Gastrocnemius medialis (tissue), 4 donors: ENCODE measurements at regions of chrX and their contacts with region 1.

Region 1: DNA sequence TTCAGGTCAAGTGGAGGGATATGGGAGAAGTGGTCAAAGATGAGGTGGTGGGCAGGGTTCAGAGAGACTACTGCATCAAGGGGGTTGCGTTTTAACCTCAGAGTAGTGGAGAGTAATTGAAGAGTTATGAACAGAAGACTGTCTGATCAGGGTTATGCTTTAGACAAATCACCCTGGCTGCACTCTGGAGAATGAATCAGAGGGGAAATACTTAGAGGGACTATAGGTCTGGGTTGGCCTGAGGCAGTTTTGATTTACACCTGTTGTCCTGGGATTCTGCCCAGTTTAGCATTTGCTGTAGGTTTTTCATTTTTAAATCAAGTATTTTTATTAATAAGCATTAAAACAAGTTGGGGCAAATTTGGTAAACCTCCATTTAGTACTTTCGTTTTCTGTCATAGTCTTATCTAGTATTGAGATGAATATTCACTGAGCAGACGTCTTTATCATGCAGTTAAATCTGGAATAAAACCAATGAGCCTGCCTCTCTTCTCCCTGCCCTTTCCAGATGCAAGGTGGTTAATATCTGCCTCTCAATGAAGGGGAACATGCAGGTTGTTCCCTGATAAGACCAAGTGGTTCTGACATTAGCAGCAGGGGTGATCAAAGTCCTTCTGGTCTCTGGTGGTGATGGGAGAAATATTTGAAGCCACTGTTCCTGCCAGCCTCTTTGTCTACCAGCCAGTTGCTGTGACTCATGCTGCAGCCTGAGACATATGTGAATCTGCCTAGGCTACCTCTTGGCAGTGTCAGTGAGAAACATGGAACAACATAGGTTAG is 116.0 kb upstream of the RPS6KA3 start:
- DNase-seq: peak in 1 of 2 donors; percentile 24
- ATAC-seq: peak; percentile 75 to 79
- H3K4me3 ChIP-seq: no peak overlapping the region
- H3K27ac ChIP-seq: peak overlapping the region in 1 of 4 donors; percentile 31
- H3K4me1 ChIP-seq: peaks cover 0 to 8% of the 10 kb centered on the region in 2 donors
- H3K27me3 ChIP-seq: no peaks in the 10 kb centered on the region
- CTCF ChIP-seq: no peak
- POLR2A ChIP-seq: no peak

Region 2: GRCh38 chrX:20412871-20413486 is 30.3 kb after region 1 on chrX:
- in situ Hi-C with region 1: no loop called
- intact Hi-C with region 1: loop called (anchors 1 kb)
- DNase-seq: peak in 1 of 2 donors; percentile 11
- ATAC-seq: no peak
- H3K4me3 ChIP-seq: no peak overlapping the region
- H3K27ac ChIP-seq: no peak overlapping the region
- H3K4me1 ChIP-seq: no peaks in the 10 kb centered on the region
- H3K27me3 ChIP-seq: no peaks in the 10 kb centered on the region
- CTCF ChIP-seq: no peak
- POLR2A ChIP-seq: no peak